HCT116 (cell line): ENCODE measurements at regions of chr9 and their contacts with region 1.

Region 1: DNA sequence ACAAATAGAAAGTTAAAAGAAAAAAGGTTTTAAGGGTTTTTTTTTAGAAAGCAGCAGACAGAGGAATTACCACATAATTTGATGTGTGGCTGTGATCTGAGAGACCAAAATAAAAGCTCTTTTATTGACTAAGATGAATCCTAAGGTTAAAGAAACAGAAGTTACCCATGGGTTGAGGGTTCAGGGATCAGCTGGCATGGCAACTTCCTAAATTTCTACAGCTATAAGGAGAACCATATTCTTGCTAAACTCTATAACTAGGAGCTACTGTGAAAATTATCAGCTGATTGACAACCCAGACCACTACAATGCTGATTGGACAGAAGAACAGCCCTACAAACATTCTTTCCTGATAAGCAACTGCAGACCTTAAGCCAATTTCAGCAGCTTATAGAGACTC is 40.2 kb downstream of the TMEM215 start:
- DNase-seq: no peak
- ATAC-seq: no peak
- H3K4me3 ChIP-seq: no peak overlapping the region
- H3K27ac ChIP-seq: no peak overlapping the region
- H3K4me1 ChIP-seq: no peaks in the 10 kb centered on the region
- H3K27me3 ChIP-seq: peaks cover 64% of the 10 kb centered on the region
- CTCF ChIP-seq: no peak
- POLR2A ChIP-seq: no peak
- RAD21 ChIP-seq: no peak

Region 2: GRCh38 chr9:32395490-32396216 is 427.9 kb before region 1 on chr9:
- CTCF ChIA-PET with region 1: no interaction called
- POLR2A ChIA-PET with region 1: no interaction called
- RAD21 ChIA-PET with region 1: no interaction called
- intact Hi-C with region 1: no loop called
- DNase-seq: no peak
- ATAC-seq: 0 out of 2 replicates have a peak, but pooled peaks have one; percentile 50
- H3K4me3 ChIP-seq: no peak overlapping the region
- H3K27ac ChIP-seq: no peak overlapping the region
- H3K4me1 ChIP-seq: peaks cover 4 to 6% of the 10 kb centered on the region in 2 experiments; a peak in 2 of 4 replicates
- H3K27me3 ChIP-seq: no peaks in the 10 kb centered on the region
- CTCF ChIP-seq: no peak
- POLR2A ChIP-seq: no peak
- RAD21 ChIP-seq: no peak

Region 3: DNA sequence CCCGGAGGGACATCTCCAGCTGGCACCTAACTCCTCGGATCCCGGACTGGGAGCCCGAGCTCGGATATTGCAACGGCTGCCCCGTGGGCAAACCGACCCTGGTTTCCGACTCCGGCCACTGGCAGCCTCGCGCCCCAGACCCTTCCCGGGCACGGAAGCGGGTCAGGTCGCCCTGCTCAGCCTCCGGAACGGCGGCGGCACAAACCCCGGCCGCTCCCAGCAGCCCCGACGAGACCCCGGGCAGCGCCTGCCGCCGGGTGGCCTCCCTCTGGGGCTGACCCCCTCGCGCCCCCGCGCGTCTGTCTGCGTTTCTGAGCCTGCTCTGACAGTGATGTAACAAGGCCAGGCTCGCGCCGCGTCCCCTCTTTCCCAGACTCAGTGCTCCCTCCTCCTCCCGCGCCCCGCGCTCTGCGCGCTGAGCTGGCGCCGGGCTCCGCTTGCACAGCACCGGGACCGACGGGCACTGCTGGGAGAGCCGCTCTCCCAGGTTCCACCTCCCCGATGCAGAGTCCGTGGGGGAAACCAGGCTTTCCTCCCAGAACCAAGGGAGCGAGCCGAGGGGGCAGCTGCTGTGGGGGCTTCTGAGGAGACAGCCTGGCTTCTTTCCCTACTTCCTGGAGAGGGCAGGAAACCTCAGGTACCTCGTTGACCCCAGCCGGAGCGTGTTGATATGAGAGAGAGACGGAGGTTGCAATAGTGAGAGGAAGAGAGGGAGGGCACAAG is 40.2 kb before region 1 on chr9 and contains the start of gene TMEM215:
- CTCF ChIA-PET with region 1: no interaction called
- POLR2A ChIA-PET with region 1: no interaction called
- RAD21 ChIA-PET with region 1: no interaction called
- intact Hi-C with region 1: loop called (anchors 5 kb)
- DNase-seq: no peak
- ATAC-seq: no peak
- H3K4me3 ChIP-seq: no peak within 1 kb of the TSS
- H3K27ac ChIP-seq: no peak within 1 kb of the TSS
- H3K4me1 ChIP-seq: no peaks in the 10 kb centered on the region
- H3K27me3 ChIP-seq: peaks cover 63% of the 10 kb centered on the region
- CTCF ChIP-seq: no peak
- POLR2A ChIP-seq: no peak
- RAD21 ChIP-seq: no peak
- total RNA-seq, gene TMEM215: not detected